AG04449 (cell line): ENCODE measurements at regions of chr19 and their contacts with region 1.

Region 1: GRCh38 chr19:45439569-45440254 is 16.0 kb upstream of the ERCC1 start:
- DNase-seq: no peak
- H3K4me3 ChIP-seq: peak overlapping the region; percentile 61
- CTCF ChIP-seq: peak; percentile 85

Region 2: DNA sequence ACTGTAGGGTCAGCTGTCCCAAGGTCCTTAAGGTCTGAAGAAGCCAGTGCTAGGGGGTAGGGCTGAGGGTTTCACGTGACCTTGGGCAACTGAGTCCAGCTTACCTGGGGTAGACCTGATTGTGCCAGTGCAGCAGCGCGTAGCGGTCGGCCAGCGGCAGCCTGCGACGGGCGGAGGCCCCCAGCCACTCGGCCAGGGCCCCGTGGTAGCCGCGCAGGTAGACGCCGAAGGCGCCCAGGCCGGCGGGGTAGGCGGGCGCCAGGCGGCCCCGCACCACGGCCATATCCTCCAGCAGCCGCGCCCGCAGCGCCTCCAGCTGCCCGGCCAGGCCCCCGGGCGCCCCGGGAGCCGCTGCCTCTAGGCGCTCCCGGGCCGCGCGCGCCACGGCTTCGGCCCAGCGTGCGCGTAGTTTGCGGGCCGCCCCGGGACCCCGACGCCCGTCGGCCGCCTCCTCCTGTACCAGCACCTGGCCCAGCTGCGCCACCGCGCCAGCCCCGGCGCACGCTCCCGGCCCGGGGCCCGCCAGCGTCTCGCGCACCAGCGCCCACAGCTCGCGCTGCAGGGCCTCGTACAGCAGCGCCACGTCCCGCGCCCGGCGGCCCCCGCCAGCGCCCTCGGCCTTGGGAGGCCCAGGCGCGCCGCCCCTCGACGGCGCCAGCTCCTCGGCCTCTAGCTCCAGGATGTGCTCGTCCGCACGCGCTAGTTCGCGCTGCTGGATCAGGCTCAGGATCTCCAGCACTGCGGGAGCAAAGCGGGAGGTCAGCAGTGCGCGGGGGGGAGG is 205.4 kb before region 1 on chr19:
- CTCF ChIA-PET with region 1: no interaction called
- POLR2A ChIA-PET with region 1: no interaction called
- DNase-seq: no peak
- H3K4me3 ChIP-seq: no peak overlapping the region
- CTCF ChIP-seq: no peak

Region 3: DNA sequence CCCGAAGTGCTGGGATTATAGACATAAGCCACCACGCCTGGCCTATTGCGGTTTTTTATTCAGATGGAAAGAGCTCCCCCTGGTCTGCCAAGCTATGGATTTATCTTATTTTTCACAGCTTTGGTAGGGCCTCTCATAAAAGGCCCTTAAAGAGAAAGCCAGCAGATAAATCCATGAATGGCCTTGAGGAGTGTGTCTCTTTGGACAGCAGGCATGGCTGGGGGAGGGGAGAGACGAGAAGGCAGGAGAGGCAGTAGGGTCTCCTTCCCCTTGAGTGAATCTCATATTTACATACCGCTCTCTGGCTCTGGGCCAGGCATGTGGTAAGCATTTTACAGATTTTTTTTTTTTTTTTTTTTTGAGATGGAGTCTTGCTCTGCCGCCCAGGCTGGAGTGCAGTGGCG is 163.4 kb before region 1 on chr19:
- CTCF ChIA-PET with region 1: no interaction called
- POLR2A ChIA-PET with region 1: no interaction called
- DNase-seq: no peak
- H3K4me3 ChIP-seq: no peak overlapping the region
- CTCF ChIP-seq: no peak

Region 4: DNA sequence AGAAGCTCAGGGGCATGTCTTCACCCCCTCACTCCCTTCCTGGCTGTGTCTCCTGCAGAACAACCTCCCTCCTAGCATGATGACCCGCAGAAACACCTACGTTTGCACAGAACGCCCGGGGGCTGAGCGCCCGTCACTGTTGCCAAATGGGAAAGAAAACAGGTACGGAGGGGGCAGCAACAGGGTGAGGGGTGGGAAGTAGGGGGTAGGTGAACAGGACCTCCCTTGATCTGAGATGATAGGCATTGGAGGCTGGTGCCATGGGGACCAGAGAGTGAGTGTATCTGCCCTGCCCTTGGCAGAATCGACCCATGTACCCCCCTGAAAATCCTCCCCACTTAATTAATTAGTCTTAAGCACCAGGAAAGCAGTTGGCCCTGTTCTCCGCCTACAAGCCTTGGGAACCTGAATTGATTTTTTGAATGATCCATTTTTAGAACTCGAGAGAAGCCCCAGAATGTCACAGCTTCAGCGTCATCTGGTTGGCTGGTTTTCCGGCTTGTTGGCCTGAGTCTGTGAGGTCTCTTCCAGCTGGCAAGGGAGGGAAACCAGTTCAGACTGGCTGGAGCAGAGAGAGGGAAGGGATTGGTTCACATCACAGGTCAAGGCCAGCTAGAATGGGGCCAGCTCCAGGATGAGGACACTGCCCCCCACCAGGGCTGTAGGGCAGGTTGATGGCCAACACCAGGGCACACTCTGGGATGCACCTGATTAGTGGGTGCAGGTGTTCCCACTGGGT is 145.3 kb before region 1 on chr19:
- CTCF ChIA-PET with region 1: no interaction called
- POLR2A ChIA-PET with region 1: no interaction called
- DNase-seq: no peak
- H3K4me3 ChIP-seq: no peak overlapping the region
- CTCF ChIP-seq: no peak

Region 5: DNA sequence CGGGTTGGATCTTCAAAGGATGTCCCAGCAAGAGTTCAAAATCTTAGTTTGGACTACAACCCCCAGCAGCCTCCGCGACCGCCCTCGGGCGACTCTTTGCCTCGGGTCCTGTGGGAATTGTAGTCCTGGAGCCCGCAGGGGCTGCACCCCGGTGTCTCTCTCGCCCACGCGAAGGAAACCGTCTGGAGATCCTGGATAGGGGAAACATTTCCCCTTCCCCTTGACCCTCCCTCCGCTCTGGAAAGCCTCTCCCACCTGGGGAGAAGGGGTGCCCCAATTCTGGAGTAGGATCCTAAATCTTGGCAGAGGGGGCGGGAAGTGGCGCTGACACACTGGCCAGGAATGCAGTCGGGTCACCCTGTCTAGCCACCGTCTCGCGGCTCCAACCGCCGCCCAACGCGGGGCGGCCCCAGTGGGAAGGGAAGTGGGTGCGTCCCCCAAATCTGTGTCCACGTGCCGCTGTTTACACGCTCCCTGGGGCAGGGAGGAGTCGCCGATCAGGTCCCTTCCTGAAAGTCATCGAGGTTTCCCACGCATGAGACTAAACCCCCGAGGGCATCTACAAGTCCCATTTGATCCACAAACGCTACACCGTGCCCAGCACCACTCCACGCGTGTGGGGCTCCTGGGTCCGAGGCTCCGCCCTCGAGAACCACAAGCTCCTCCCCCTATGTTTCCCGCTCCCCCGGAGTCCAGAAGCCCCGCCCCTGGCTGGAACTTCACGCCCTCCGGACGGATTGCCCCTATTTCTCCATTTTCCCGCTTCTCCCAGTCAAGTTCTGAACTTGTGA is 34.1 kb before region 1 on chr19:
- CTCF ChIA-PET with region 1: interaction called, 17 read pairs
- POLR2A ChIA-PET with region 1: no interaction called
- DNase-seq: no peak
- H3K4me3 ChIP-seq: peak overlapping the region; percentile 88
- CTCF ChIP-seq: no peak

Region 6: GRCh38 chr19:45413497-45413896 is 26.2 kb before region 1 on chr19:
- CTCF ChIA-PET with region 1: interaction called, 17 read pairs
- POLR2A ChIA-PET with region 1: no interaction called
- DNase-seq: no peak
- H3K4me3 ChIP-seq: no peak overlapping the region
- CTCF ChIP-seq: no peak

Region 7: GRCh38 chr19:45423589-45424190 is 16.0 kb before region 1 on chr19 and contains the start of gene ERCC1:
- CTCF ChIA-PET with region 1: interaction called, 61 read pairs
- POLR2A ChIA-PET with region 1: no interaction called
- DNase-seq: no peak
- H3K4me3 ChIP-seq: peak within 1 kb of the TSS; percentile 82
- CTCF ChIP-seq: no peak

Region 8: DNA sequence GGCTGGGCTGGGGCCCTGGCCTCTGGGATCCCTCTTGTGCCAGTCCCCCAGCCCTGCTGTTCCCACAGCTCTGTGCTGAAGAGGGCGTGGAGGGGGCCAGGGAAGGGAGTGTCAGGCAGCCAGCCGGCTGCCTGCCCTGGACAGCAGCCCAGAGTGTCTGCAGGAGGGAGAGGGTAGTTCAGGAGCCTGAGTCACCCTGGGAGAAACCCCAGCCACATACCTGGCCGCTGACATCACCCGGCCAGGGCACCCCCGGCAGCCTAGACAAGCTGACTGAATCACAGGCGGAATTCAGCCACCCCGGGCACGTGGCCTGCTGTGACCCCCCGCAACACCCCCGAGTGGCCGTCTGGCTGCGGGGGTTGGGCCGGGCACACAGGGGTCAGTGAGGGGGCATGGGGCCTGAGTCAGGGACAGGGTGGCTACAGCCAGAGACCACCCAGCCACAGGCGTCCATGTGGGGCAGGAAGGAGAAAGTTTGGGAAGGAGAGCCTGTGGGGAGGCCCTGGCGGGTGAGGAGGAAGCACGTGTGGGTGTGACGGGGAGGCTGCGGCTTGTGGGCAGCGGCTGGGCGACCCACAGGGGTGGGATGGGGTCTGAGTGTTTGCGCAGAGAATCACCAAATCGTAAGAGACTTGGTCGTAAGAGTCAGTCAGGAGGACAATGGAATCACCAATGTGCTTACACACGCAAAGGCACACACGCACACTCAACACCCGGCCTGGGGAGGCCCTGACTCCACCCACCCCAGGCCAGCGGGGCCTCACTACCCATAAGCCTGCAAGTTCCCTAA is 16.2 kb after region 1 on chr19:
- CTCF ChIA-PET with region 1: interaction called, 37 read pairs
- POLR2A ChIA-PET with region 1: interaction called, 6 read pairs
- DNase-seq: peak; percentile 98
- H3K4me3 ChIP-seq: peak overlapping the region; percentile 42
- CTCF ChIP-seq: no peak

Region 9: GRCh38 chr19:45469132-45469944 is 29.6 kb after region 1 on chr19:
- CTCF ChIA-PET with region 1: interaction called, 773 read pairs
- POLR2A ChIA-PET with region 1: interaction called, 11 read pairs
- DNase-seq: no peak
- H3K4me3 ChIP-seq: peak overlapping the region; percentile 95
- CTCF ChIP-seq: peak; percentile 0

Region 10: GRCh38 chr19:45496349-45496953 is 56.7 kb after region 1 on chr19:
- CTCF ChIA-PET with region 1: interaction called, 27 read pairs
- POLR2A ChIA-PET with region 1: no interaction called
- DNase-seq: no peak
- H3K4me3 ChIP-seq: peak overlapping the region; percentile 69
- CTCF ChIP-seq: no peak

Region 11: DNA sequence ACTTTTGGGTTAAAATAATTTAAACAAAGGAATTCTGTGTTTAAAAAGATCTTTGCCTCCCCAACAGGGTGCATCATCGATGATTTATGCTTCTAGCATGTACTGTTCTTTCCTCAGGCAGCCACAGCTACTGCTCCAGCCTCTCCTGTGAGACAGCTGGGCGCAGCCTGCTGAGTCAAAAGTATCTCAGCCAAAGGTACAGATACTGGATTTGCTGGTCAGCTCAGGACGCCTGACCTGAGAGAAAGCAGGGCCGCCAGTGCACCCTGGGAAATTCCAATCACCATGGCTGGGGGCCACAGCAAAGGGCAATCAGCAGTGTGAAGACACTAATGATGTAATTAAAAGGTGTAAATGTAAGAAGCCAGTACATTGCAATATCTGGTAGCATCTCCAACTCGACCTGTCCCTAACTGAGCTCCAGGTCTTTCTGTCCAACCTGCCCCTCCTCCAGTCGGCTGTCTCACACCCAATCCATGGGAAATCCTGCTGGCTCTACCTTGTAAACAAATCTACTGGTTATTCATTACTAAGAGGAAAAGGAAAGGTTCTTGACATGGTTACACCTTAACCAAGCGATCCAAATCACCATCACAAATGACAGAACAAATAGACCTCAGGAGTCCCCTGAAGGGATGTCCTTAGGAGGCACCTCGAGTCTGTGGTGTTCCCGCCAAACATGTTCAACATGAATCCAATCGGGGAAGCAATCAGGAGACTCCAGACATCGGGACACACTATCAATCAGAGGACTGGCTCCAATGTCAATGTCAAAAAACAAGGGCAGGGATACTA is 137.6 kb after region 1 on chr19:
- CTCF ChIA-PET with region 1: no interaction called
- POLR2A ChIA-PET with region 1: no interaction called
- DNase-seq: peak; percentile 53
- H3K4me3 ChIP-seq: no peak overlapping the region
- CTCF ChIP-seq: no peak